Mammary epithelial cell (primary cell): ENCODE measurements at regions of chr6 and their contacts with region 1.

Region 1: GRCh38 chr6:72622094-72622940 is 453 bp downstream of the KCNQ5 start:
- DNase-seq: peak; percentile 46
- H3K4me3 ChIP-seq: peak overlapping the region; percentile 65 to 72 (median 72)
- H3K27ac ChIP-seq: peak overlapping the region; percentile 50
- H3K4me1 ChIP-seq: peaks cover 21% of the 10 kb centered on the region
- H3K27me3 ChIP-seq: no peaks in the 10 kb centered on the region
- CTCF ChIP-seq: peak in 1 of 2 donors; percentile 35

Region 2: GRCh38 chr6:72683797-72684196 is 61.5 kb after region 1 on chr6:
- CTCF ChIA-PET with region 1: no interaction called
- dilution Hi-C with region 1: no loop called
- in situ Hi-C with region 1: no loop called
- intact Hi-C with region 1: no loop called
- DNase-seq: no peak
- H3K4me3 ChIP-seq: no peak overlapping the region
- H3K27ac ChIP-seq: no peak overlapping the region
- H3K4me1 ChIP-seq: no peaks in the 10 kb centered on the region
- H3K27me3 ChIP-seq: no peaks in the 10 kb centered on the region
- CTCF ChIP-seq: no peak

Region 3: DNA sequence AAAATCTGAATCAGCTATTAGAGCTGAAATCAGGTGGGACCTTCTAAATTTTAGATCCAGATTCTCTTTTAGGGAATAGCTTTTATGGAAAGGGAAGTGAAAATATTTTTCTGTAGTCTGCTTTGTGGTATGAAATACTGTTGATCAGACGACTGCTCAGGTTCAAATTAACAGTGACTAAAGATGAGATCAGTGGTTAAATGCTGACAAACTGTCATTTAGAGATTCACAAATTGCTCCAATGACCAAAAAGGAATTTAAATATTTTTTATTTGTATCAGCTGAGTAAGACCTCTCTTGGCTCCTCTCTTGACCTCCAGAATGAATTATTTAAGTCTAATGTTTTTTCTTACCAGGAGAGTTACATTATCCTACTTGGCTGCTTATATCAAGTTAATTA is 76.8 kb after region 1 on chr6:
- CTCF ChIA-PET with region 1: no interaction called
- dilution Hi-C with region 1: no loop called
- in situ Hi-C with region 1: no loop called
- intact Hi-C with region 1: no loop called
- DNase-seq: no peak
- H3K4me3 ChIP-seq: no peak overlapping the region
- H3K27ac ChIP-seq: no peak overlapping the region
- H3K4me1 ChIP-seq: no peaks in the 10 kb centered on the region
- H3K27me3 ChIP-seq: no peaks in the 10 kb centered on the region
- CTCF ChIP-seq: no peak

Region 4: DNA sequence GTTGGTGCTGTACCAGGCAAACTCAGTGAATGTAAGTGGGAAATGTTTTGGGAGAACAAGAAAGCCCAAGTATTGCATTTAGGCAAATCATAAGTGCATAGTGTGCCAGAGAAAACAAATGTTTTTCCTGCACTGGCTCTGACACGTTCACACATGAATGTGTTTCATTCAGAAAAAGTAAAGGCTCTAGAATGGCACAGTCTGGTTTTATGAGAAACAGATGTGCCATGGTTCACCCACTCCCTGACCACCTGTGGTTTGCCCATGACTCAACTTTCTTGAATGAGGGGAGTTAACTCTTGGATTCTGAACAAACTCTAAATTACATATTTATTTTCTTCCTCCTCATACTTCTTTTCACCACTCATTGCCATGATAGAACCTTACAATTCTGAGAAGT is 126.4 kb after region 1 on chr6:
- CTCF ChIA-PET with region 1: no interaction called
- dilution Hi-C with region 1: no loop called
- in situ Hi-C with region 1: no loop called
- intact Hi-C with region 1: loop called (anchors 5 kb)
- DNase-seq: peak; percentile 98
- H3K4me3 ChIP-seq: no peak overlapping the region
- H3K27ac ChIP-seq: no peak overlapping the region
- H3K4me1 ChIP-seq: peaks cover 28% of the 10 kb centered on the region
- H3K27me3 ChIP-seq: no peaks in the 10 kb centered on the region
- CTCF ChIP-seq: no peak

Region 5: DNA sequence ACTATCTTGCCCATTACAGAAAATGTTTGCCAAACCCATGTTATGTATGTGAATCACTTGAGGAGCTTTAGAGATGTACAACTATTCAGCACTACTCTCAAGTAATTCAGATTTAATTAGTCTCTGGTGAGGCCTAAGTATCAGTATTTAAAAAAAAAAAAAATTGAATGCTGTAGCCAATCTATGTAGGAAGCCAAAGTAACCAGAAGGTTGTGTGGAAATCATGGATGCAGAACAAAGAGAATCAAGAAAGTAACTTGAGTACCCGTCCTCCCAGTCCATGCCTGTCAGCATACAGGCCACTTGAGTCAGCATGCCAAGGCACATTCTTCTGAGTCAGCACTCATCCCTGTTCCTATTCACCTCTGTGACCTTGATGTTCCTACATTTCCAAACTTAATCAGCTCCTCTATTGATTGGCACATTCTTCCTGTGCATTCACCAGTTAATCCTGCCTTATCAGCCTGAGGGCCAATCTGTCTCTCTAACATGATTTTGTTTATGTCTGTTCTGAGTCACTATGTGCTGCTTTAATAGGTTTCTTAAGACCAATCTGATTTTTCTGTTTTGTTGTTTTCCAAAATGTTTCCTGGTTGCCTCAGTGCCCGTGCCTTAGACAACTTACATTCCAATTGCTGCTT is 165.2 kb after region 1 on chr6:
- CTCF ChIA-PET with region 1: no interaction called
- dilution Hi-C with region 1: no loop called
- in situ Hi-C with region 1: no loop called
- intact Hi-C with region 1: loop called (anchors 10 kb)
- DNase-seq: peak; percentile 94
- H3K4me3 ChIP-seq: peak overlapping the region in 1 of 3 experiments; percentile 17
- H3K27ac ChIP-seq: peak overlapping the region; percentile 99
- H3K4me1 ChIP-seq: peaks cover 47% of the 10 kb centered on the region
- H3K27me3 ChIP-seq: no peaks in the 10 kb centered on the region
- CTCF ChIP-seq: no peak

Region 6: GRCh38 chr6:72861935-72862432 is 239.7 kb after region 1 on chr6:
- CTCF ChIA-PET with region 1: no interaction called
- dilution Hi-C with region 1: no loop called
- in situ Hi-C with region 1: no loop called
- intact Hi-C with region 1: loop called (anchors 5 kb)
- DNase-seq: peak; percentile 39
- H3K4me3 ChIP-seq: no peak overlapping the region
- H3K27ac ChIP-seq: peak overlapping the region; percentile 50
- H3K4me1 ChIP-seq: peaks cover 30% of the 10 kb centered on the region
- H3K27me3 ChIP-seq: no peaks in the 10 kb centered on the region
- CTCF ChIP-seq: no peak

Region 7: GRCh38 chr6:72968704-72969103 is 346.4 kb after region 1 on chr6:
- CTCF ChIA-PET with region 1: interaction called, 3 read pairs
- dilution Hi-C with region 1: no loop called
- in situ Hi-C with region 1: no loop called
- intact Hi-C with region 1: loop called (anchors 10 kb)
- DNase-seq: peak; percentile 93
- H3K4me3 ChIP-seq: no peak overlapping the region
- H3K27ac ChIP-seq: peak overlapping the region; percentile 95
- H3K4me1 ChIP-seq: peaks cover 20% of the 10 kb centered on the region
- H3K27me3 ChIP-seq: no peaks in the 10 kb centered on the region
- CTCF ChIP-seq: no peak

Region 8: GRCh38 chr6:73566954-73567591 is 944.8 kb after region 1 on chr6:
- CTCF ChIA-PET with region 1: no interaction called
- dilution Hi-C with region 1: no loop called
- in situ Hi-C with region 1: no loop called
- intact Hi-C with region 1: no loop called
- DNase-seq: peak; percentile 24
- H3K4me3 ChIP-seq: no peak overlapping the region
- H3K27ac ChIP-seq: no peak overlapping the region
- H3K4me1 ChIP-seq: peaks cover 16% of the 10 kb centered on the region
- H3K27me3 ChIP-seq: no peaks in the 10 kb centered on the region
- CTCF ChIP-seq: no peak